ENCODE measurements at regions of chr3 and their contacts with region 1.

Region 1: DNA sequence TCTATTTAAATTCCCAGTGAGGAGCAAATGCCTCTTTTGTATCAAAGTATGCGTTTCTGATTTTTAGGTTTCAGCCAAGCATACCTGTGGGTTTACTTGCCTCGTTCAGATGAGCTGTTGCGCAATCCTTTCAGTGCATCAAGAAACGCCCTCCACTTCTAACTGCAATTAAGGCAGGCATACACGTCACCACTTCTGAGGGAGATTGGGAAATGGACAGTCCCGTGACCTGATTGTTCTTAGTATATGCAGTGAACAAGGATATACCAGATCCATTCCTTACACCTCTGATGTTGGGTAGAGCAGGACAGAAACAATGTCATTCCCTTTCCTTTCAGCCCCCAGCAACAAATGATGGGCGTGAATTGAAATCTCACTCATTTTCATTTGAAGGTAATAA is 219.0 kb downstream of the ITPR1 start:
- DNase-seq: no peak
- CTCF ChIP-seq: no peak

Region 2: DNA sequence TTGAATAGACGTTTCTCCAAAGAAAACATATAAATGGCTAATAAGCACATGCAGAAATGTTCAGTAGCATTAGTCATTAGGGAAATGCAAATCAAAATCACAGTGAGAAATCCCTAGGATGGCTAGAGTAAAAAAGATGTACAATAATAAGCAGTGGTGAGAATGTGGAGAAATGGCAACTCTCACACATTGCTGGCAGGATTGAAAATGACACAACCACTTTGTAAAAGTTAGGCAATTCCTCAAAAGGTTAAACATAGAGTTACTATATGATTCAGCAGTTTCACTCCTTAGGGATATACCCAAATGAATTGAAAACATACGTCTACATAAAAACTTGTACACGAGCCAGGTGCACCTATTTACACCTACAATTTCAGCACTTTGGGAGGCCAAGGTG is 110.3 kb before region 1 on chr3:
- CTCF ChIA-PET with region 1: no interaction called
- POLR2A ChIA-PET with region 1: no interaction called
- DNase-seq: no peak
- CTCF ChIP-seq: no peak

Region 3: GRCh38 chr3:4738737-4739274 is 26.7 kb after region 1 on chr3:
- CTCF ChIA-PET with region 1: interaction called, 18 read pairs
- POLR2A ChIA-PET with region 1: no interaction called
- DNase-seq: no peak
- CTCF ChIP-seq: no peak

Region 4: GRCh38 chr3:4776980-4777581 is 64.9 kb after region 1 on chr3:
- CTCF ChIA-PET with region 1: interaction called, 31 read pairs
- POLR2A ChIA-PET with region 1: no interaction called
- DNase-seq: peak; percentile 71
- CTCF ChIP-seq: no peak

Region 5: DNA sequence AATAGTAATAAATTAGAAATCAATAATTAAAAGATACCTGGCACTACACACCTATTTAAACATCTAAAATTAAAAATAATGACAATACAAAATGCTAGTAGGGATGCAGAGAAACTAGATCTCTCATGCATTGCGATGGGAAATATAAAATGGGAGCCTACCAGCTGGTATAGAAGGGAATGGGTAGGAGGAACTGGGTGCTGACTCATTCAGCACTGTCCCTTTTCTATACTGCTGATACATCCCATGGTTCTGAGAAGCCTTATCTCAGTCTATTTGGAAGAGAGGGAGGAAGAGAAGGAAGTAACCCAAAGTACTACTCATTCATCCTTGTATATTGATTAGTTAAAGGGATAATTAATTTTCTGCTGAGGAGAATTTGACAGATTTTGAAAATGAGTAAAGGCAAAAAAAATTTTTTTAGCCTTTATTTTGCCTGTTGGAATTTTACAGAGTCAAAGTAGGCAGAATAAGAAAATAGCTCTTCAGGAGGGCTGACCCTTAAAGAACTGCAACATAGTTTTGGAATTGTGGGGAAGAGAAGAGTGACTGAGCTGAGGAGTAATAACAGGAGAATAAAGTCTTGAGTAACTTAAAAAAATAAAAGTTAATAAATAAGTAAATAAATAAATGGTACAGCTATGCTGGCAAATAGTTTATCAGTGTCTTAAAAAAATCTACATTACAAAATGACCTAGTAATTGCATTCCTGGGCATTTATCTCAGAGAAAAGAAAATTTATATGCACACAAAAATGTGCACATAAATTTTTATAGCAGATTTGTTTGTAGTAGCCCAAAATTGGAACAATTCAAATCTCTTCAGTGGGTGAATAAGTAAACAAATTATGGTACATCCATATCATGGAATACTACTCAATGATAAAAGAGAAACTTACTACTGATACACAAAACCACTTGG is 251.8 kb after region 1 on chr3:
- CTCF ChIA-PET with region 1: no interaction called
- POLR2A ChIA-PET with region 1: no interaction called
- DNase-seq: no peak
- CTCF ChIP-seq: no peak

Region 6: GRCh38 chr3:4978204-4978965 is 266.2 kb after region 1 on chr3:
- CTCF ChIA-PET with region 1: interaction called, 52 read pairs
- POLR2A ChIA-PET with region 1: interaction called, 3 read pairs
- DNase-seq: peak; percentile 83
- CTCF ChIP-seq: no peak

Region 7: DNA sequence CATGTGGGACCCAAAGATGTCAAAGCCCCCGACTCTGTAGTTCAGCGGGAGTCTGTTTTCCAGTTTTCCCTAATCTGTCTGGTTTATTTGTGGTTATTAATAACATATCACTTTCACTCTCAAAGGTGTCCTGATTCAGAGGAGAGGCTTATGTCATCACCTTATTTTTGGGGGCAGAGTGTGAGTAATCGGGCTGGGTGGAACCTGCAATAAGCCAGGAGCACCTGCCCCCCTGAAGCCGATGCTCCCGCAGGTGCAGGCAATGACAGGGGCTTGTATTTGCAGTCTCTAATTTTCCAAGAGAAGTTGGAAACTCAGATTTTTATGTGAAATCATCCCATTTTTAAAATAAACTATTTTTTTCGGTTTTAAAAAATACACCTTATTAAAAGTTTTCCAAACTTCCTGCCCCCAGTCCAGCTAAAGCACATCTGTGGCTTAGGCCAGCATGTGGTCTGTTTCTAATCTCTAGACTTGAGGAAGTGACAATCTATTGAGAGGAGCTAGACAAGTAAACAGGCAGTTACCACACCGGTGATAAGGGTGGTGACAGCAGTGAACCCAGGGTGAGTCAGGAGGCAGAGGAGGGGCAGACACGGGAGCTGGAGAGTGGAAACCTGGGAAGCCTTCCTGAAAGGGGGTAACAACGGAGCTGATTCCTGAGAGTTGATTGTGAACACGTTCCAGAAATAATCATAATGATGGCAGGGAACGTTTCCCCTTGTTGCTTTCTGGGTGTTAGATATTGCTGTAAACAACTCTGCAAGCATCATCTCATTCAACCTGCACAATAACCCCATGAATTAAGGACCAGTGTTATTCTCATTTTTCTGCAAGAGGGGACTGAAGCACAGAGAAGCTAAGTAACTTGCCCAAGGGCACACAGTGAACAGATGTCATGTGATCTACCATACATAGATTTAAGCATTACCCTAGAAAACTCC is 304.3 kb after region 1 on chr3:
- CTCF ChIA-PET with region 1: interaction called, 15 read pairs
- POLR2A ChIA-PET with region 1: no interaction called
- DNase-seq: peak; percentile 54
- CTCF ChIP-seq: no peak

Region 8: DNA sequence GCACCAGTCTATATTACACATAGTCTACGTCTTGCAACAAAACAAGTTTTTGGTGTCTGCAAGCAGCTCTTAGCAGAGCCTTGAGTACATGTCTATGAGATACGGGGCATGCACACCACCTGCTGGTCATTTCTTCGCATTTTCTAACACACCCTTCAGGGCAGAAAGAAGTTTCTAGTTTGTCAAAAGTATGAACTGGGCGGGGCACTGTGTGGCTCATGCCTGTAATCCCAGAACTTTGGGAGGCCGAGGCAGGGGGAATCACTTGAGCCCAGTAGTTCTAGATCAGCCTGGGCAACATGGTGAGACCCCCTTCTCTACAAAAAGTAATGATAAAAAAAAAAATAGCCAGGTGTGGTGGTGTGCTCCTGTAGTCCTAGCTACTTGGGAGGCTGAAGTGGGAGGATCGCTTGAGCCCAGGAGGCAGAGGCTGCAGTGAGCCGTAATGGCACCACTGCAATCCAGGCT is 345.7 kb after region 1 on chr3:
- CTCF ChIA-PET with region 1: interaction called, 180 read pairs
- POLR2A ChIA-PET with region 1: no interaction called
- DNase-seq: peak; percentile 67
- CTCF ChIP-seq: peak; percentile 78

Measured in GM10248 (cell line).